Naive thymus-derived CD4-positive, alpha-beta T cell (primary cell): ENCODE measurements at regions of chr1 and their contacts with region 1.

Region 1: GRCh38 chr1:18972531-18972930 is 16.1 kb upstream of the IFFO2 start:
- DNase-seq: peak in 5 of 9 donors; percentile 25 to 63 (median 49)
- ATAC-seq: peak; percentile 59
- H3K4me3 ChIP-seq: no peak overlapping the region
- H3K4me3 Mint-ChIP-seq: peak overlapping the region in 1 of 10 donors; percentile 49
- H3K27ac ChIP-seq: no peak overlapping the region
- H3K27ac Mint-ChIP-seq: peak overlapping the region in 1 of 9 donors; percentile 84
- H3K4me1 ChIP-seq: peaks cover 0 to 5% of the 10 kb centered on the region in 2 donors
- H3K4me1 Mint-ChIP-seq: peaks cover 0 to 9% (median 3%) of the 10 kb centered on the region in 7 donors
- H3K27me3 ChIP-seq: no peaks in the 10 kb centered on the region
- H3K27me3 Mint-ChIP-seq: peaks cover 0 to 16% (median 0%) of the 10 kb centered on the region in 5 donors

Region 2: DNA sequence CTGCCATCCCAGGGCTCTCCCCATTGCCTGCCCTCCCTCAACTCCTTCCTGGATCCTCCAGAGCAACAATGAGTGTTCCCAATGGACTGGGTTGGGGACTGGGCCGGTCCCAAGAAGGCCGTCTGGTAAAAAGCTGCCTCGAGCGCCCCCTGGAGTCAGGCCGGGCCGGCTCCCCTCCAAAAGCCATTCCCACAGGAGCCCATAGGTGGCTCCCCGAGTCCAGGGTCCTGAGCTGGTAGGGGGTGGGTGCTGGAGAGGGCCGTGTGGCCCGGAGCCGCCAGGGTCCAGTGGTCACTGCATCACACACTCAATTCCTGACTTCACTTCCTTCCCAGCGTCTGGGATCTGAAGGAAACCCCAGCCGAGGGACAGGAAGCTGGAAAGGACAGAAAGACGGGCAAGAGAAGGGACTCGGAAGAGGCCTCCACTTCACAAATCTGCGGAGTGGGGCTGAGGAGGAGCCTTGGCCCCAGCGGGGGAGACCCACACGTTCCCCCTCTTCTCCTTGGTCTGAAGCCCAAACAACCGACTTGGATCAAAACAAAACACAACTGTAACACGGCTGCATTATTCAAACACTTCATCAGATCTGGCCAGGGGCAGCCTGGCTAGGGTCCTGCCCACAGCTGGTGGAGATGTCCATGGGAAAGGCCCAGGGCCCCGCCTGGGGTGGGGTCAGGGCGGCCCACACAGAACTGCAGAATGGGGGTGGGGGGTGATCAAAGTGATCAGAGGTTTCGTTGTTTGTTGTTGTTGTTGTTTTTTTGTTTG is 59.3 kb before region 1 on chr1:
- CTCF ChIA-PET with region 1: interaction called, 105 read pairs
- POLR2A ChIA-PET with region 1: interaction called, 8 read pairs
- intact Hi-C with region 1: loop called in 1 of 2 experiments (anchors 1 kb)
- DNase-seq: peak; percentile 53 to 80 (median 61)
- ATAC-seq: peak; percentile 85
- H3K4me3 ChIP-seq: no peak overlapping the region
- H3K4me3 Mint-ChIP-seq: no peak overlapping the region
- H3K27ac ChIP-seq: no peak overlapping the region
- H3K27ac Mint-ChIP-seq: peak overlapping the region in 4 of 9 donors; percentile 59 to 84 (median 77)
- H3K4me1 ChIP-seq: peaks cover 0 to 4% of the 10 kb centered on the region in 2 donors
- H3K4me1 Mint-ChIP-seq: peaks cover 2 to 15% (median 9%) of the 10 kb centered on the region in 7 donors
- H3K27me3 ChIP-seq: no peaks in the 10 kb centered on the region
- H3K27me3 Mint-ChIP-seq: no peaks in the 10 kb centered on the region

Region 3: GRCh38 chr1:18949686-18950400 is 22.7 kb before region 1 on chr1:
- CTCF ChIA-PET with region 1: interaction called, 6 read pairs
- POLR2A ChIA-PET with region 1: interaction called, 4 read pairs
- intact Hi-C with region 1: loop called in 1 of 2 experiments (anchors 1 kb)
- DNase-seq: peak in 3 of 9 donors; percentile 19 to 35 (median 32)
- ATAC-seq: no peak
- H3K4me3 ChIP-seq: peak overlapping the region; percentile 50
- H3K4me3 Mint-ChIP-seq: peak overlapping the region; percentile 82 to 94 (median 90)
- H3K27ac ChIP-seq: peak overlapping the region; percentile 98
- H3K27ac Mint-ChIP-seq: peak overlapping the region; percentile 91 to 99 (median 98)
- H3K4me1 ChIP-seq: peaks cover 95 to 99% of the 10 kb centered on the region in 2 donors
- H3K4me1 Mint-ChIP-seq: peaks cover 83 to 98% (median 93%) of the 10 kb centered on the region in 7 donors
- H3K27me3 ChIP-seq: no peaks in the 10 kb centered on the region
- H3K27me3 Mint-ChIP-seq: peaks cover 0 to 2% (median 0%) of the 10 kb centered on the region in 5 donors

Region 4: GRCh38 chr1:19074902-19075721 is 102.6 kb after region 1 on chr1:
- CTCF ChIA-PET with region 1: interaction called, 5 read pairs
- POLR2A ChIA-PET with region 1: interaction called, 8 read pairs
- intact Hi-C with region 1: loop called in 1 of 2 experiments (anchors 5 kb)
- DNase-seq: peak in 1 of 9 donors; percentile 10
- ATAC-seq: peak; percentile 19
- H3K4me3 ChIP-seq: peak overlapping the region; percentile 41
- H3K4me3 Mint-ChIP-seq: peak overlapping the region; percentile 45 to 82 (median 72)
- H3K27ac ChIP-seq: peak overlapping the region; percentile 18
- H3K27ac Mint-ChIP-seq: peak overlapping the region; percentile 32 to 93 (median 76)
- H3K4me1 ChIP-seq: peaks cover 32 to 52% of the 10 kb centered on the region in 2 donors
- H3K4me1 Mint-ChIP-seq: peaks cover 30 to 69% (median 60%) of the 10 kb centered on the region in 7 donors
- H3K27me3 ChIP-seq: no peaks in the 10 kb centered on the region
- H3K27me3 Mint-ChIP-seq: no peaks in the 10 kb centered on the region